Breast epithelium (tissue), 4 donors: ENCODE measurements at regions of chr5 and their contacts with region 1.

Region 1: DNA sequence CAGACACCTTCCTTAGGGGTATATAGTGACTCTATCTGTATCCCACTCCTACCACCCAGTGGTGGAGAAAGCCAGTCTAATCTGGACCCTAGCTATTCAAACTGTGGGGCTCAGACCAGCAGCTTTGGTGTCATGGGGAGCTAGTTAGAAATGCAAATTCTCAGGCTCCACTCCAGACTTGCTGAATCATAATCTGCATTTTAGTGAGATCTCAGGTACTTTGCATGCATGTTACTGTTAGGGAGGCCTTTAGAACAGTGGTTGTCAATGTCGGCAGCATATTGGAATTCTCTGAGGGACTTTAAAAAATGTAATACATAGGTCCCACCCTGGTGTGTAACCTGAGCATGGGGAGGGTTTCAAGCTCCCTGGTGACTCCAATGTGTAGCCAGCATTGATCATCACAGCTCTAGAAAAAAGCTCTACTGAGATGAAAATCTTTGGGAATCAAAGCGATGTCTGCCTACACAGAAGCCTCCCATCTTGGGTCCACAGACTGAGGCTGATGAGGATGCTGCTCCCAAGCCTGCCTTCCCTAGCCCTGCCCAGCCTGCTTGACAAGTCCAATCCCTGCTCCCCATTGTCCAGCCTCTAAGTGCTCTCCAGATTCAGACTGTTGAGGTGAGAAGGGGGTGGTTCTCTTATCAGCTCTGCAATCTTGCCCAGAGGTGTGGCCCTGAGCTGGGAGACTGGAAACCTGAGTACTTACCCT is 11.9 kb upstream of the GM2A start:
- DNase-seq: no peak
- H3K4me3 ChIP-seq: no peak overlapping the region
- H3K27ac ChIP-seq: no peak overlapping the region
- H3K4me1 ChIP-seq: no peaks in the 10 kb centered on the region
- H3K27me3 ChIP-seq: no peaks in the 10 kb centered on the region
- CTCF ChIP-seq: no peak
- POLR2A ChIP-seq: no peak

Region 2: GRCh38 chr5:151126199-151126645 is 114.9 kb before region 1 on chr5:
- intact Hi-C with region 1: loop called (anchors 10 kb)
- DNase-seq: peak; percentile 47 to 75
- H3K4me3 ChIP-seq: no peak overlapping the region
- H3K27ac ChIP-seq: no peak overlapping the region
- H3K4me1 ChIP-seq: peaks cover 0 to 2% of the 10 kb centered on the region in 2 donors
- H3K27me3 ChIP-seq: no peaks in the 10 kb centered on the region
- CTCF ChIP-seq: peak; percentile 84 to 90 (median 89)
- POLR2A ChIP-seq: no peak

Region 3: GRCh38 chr5:151196556-151197290 is 44.4 kb before region 1 on chr5:
- intact Hi-C with region 1: no loop called
- DNase-seq: no peak
- H3K4me3 ChIP-seq: no peak overlapping the region
- H3K27ac ChIP-seq: peak overlapping the region in 1 of 2 donors; percentile 64
- H3K4me1 ChIP-seq: no peaks in the 10 kb centered on the region
- H3K27me3 ChIP-seq: no peaks in the 10 kb centered on the region
- CTCF ChIP-seq: no peak
- POLR2A ChIP-seq: no peak